Mammary epithelial cell (primary cell): ENCODE measurements at regions of chr4 and their contacts with region 1.

Region 1: DNA sequence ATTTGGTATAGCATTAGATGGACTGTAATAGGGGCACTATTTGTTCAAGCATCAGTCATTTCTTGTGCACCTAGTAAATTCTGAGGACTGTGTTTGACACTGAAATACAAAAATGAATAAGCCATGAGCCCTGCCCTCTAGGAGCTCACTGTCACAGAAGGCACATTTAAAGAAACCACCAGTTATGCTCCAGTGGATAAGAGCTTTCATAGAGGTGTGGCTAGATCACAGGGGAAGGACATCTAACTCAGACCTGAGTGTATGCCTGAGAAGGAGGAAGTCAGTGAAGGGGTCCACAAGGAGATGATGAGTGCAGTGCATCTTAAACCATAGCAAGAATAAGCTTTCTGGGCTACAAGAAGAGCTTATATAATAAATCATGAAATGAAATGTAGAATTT is 40.1 kb downstream of the BTC start:
- DNase-seq: no peak
- H3K4me3 ChIP-seq: no peak overlapping the region
- H3K27ac ChIP-seq: no peak overlapping the region
- H3K4me1 ChIP-seq: no peaks in the 10 kb centered on the region
- H3K27me3 ChIP-seq: peaks cover 2% of the 10 kb centered on the region
- CTCF ChIP-seq: no peak

Region 2: GRCh38 chr4:74714611-74715130 is 39.5 kb before region 1 on chr4:
- CTCF ChIA-PET with region 1: no interaction called
- dilution Hi-C with region 1: loop called (anchors 5 kb)
- in situ Hi-C with region 1: no loop called
- intact Hi-C with region 1: no loop called
- DNase-seq: no peak
- H3K4me3 ChIP-seq: no peak overlapping the region
- H3K27ac ChIP-seq: no peak overlapping the region
- H3K4me1 ChIP-seq: no peaks in the 10 kb centered on the region
- H3K27me3 ChIP-seq: no peaks in the 10 kb centered on the region
- CTCF ChIP-seq: no peak